Right cardiac atrium (tissue), 5 donors: ENCODE measurements at regions of chr6 and their contacts with region 1.

Region 1: DNA sequence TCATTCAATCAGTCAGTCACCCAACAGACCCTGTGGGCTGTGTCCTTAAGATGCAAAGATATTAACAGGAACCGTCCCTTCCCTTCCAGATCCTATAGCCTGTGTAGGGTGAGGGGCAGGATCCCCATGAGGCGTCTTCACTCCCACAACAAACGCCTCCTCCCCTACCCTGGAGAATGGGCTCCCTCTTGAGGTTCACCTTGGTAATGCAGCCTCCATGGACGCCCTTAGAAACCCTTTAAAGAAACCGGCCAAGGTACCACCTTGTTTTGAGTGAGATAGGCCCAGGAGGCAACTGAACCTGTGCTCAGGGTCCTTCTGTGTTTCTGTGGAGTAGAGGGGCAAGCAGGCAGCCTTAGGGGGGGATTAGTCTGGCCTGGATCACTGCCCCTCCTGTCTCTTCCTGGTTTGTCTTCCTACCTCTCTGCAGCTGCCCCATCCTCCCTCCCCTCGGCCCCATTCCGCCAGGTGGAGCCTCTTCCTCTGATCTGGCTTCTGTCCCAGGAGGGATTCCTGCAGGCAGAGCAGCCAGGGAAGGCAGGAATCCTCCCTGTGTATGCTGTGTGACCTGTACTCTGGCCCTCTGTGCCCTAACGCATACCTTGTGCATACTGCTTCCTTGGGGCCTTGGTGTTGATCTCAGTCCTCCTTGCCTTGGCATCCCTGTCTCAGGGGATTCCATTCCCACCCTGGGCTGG is 6.6 kb upstream of the GUCA1A start:
- DNase-seq: peak; percentile 47 to 74 (median 69)
- ATAC-seq: peak; percentile 71 to 81
- H3K4me3 ChIP-seq: no peak overlapping the region
- H3K27ac ChIP-seq: no peak overlapping the region
- H3K4me1 ChIP-seq: no peaks in the 10 kb centered on the region
- H3K27me3 ChIP-seq: no peaks in the 10 kb centered on the region

Region 2: GRCh38 chr6:42075159-42075838 is 91.3 kb before region 1 on chr6:
- intact Hi-C with region 1: loop called (anchors 1 to 2 kb)
- DNase-seq: peak; percentile 74 to 91 (median 90)
- ATAC-seq: peak; percentile 51 to 72
- H3K4me3 ChIP-seq: no peak overlapping the region
- H3K27ac ChIP-seq: peak overlapping the region; percentile 15
- H3K4me1 ChIP-seq: peaks cover 1% of the 10 kb centered on the region
- H3K27me3 ChIP-seq: no peaks in the 10 kb centered on the region